CD8-positive, alpha-beta T cell (primary cell): ENCODE measurements at regions of chr3 and their contacts with region 1.

Region 1: DNA sequence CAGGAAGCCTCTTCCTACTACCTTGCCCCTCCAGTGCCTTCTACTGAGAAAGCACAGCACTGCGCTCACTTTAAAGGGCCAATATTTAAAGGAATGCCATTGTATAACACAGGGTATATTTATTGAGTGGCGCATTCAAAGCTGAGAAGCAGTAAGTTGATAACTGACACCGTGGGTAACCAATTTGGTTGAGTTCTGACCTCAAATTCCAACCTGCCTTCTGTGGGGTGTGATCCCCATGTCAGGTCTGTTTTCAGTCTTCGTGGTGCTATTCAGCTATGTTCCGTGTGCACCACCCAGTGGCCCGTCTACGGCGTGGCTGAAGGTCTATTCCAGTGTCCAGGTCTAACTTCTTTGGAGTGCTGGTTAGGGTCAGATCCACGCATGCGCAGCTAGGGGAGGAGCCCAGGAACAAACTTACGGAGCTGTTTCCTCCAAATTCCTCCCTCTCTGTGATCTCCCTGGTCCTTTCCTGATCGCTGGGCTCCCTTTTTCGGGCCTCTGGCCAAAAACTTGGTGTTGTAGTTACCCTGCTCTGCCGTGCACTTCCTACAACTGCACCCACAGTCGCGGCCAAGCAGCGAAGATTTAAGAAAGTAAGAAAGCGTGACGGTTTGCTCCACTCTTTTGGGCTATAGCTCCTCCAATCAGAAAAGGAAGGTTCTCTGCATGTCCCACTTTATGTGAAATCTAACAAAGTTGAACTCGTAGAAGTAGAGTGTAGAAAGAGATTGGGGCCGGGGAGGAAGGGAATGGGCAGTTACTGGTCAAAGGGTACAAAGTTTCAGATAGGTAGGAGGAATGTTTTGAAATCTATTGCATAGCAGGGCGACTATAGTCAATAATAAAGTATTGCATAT is 7.7 kb downstream of the LRRC2 start:
- DNase-seq: peak; percentile 37 to 89 (median 76)
- ATAC-seq: peak; percentile 97
- H3K4me3 ChIP-seq: peak overlapping the region; percentile 13 to 41
- H3K4me3 Mint-ChIP-seq: peak overlapping the region; percentile 80
- H3K27ac ChIP-seq: no peak overlapping the region
- H3K27ac Mint-ChIP-seq: peak overlapping the region; percentile 80
- H3K4me1 ChIP-seq: peaks cover 5% of the 10 kb centered on the region
- H3K4me1 Mint-ChIP-seq: peaks cover 17% of the 10 kb centered on the region
- H3K27me3 ChIP-seq: no peaks in the 10 kb centered on the region
- H3K27me3 Mint-ChIP-seq: no peaks in the 10 kb centered on the region
- CTCF ChIP-seq: peak; percentile 97

Region 2: GRCh38 chr3:45864760-45865519 is 693.5 kb before region 1 on chr3:
- CTCF ChIA-PET with region 1: no interaction called
- POLR2A ChIA-PET with region 1: no interaction called
- intact Hi-C with region 1: no loop called
- DNase-seq: peak in 2 of 9 experiments; percentile 28 to 43
- ATAC-seq: peak; percentile 25
- H3K4me3 ChIP-seq: no peak overlapping the region
- H3K4me3 Mint-ChIP-seq: peak overlapping the region; percentile 20
- H3K27ac ChIP-seq: no peak overlapping the region
- H3K27ac Mint-ChIP-seq: no peak overlapping the region
- H3K4me1 ChIP-seq: peaks cover 21% of the 10 kb centered on the region
- H3K4me1 Mint-ChIP-seq: peaks cover 35% of the 10 kb centered on the region
- H3K27me3 ChIP-seq: peaks cover 0 to 3% of the 10 kb centered on the region in 2 experiments
- H3K27me3 Mint-ChIP-seq: peaks cover 21% of the 10 kb centered on the region
- CTCF ChIP-seq: no peak

Region 3: DNA sequence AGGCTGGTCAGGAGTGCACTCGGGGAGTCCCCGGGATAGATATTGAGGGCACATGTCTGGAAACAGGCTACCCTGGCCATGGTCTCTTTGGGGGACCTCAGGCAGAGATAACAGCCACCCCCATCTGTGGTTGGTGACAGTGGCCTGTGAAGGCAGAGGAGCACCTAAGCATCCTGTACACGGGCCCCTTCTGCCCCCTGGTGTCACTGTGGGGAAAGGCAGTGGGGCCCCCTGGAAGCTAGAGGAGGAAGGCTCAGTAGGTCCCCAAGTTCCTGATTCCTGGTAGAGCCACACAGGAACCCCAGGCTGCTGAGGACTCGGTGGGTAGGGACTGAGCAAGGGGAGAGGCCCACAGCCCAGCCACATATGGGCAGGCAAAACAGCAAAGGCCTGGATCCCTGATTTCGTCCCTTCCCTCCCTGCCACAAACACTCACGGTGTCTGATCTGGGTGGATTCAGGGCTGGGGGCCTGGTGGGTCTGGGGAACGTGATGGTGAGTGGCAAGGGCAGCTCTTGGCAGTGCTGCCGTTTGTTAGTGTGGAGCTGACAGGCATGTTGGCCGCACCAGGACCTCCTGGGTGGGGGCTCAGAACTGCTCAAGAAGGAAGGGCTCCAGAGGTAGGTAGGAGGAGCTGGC is 629.3 kb before region 1 on chr3:
- CTCF ChIA-PET with region 1: no interaction called
- POLR2A ChIA-PET with region 1: no interaction called
- intact Hi-C with region 1: no loop called
- DNase-seq: peak; percentile 39 to 78 (median 66)
- ATAC-seq: peak; percentile 97
- H3K4me3 ChIP-seq: no peak overlapping the region
- H3K4me3 Mint-ChIP-seq: no peak overlapping the region
- H3K27ac ChIP-seq: no peak overlapping the region
- H3K27ac Mint-ChIP-seq: peak overlapping the region; percentile 63
- H3K4me1 ChIP-seq: no peaks in the 10 kb centered on the region
- H3K4me1 Mint-ChIP-seq: peaks cover 4% of the 10 kb centered on the region
- H3K27me3 ChIP-seq: no peaks in the 10 kb centered on the region
- H3K27me3 Mint-ChIP-seq: no peaks in the 10 kb centered on the region
- CTCF ChIP-seq: peak; percentile 72

Region 4: DNA sequence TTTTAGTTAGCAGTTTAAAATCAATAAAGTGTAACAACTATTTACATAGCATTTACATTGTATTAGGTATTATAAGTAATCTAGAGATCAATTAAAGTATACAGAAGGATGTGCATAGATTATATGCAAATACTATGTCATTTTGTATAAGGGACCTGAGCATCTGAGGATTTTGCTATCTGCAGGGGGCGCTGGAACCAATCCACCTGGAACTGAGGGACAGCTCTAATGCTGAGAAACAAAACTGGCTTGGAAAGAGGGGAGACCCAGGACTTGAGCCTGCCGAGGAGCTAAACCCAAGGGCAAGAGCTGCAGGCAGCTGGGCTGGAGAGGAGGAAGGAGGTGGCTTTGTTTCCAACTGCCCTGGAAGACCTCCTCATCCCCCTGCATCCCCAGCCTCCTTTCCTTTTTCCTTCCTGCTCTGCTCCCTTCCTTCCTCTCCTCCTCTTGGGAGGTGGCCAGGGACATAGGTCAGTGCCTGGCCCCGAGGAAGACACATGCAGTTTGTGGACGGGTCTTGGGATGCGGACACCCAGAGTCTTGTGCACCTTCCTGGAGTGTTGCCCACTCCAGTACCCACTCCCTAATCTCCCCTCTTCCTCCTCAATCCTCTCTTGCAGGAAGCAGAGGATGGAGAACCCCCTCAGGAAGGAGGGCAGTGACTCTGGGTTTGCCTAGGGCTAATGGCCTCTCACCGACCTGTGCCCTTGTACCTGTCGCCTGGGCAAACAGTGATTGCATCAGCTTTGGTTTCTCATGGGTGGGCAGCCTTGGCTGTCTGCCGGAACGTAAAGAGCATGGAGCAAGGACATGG is 61.5 kb before region 1 on chr3:
- CTCF ChIA-PET with region 1: interaction called, 301 read pairs
- POLR2A ChIA-PET with region 1: no interaction called
- intact Hi-C with region 1: loop called (anchors 1 to 2 kb)
- DNase-seq: peak; percentile 20 to 71 (median 61)
- ATAC-seq: peak; percentile 61
- H3K4me3 ChIP-seq: no peak overlapping the region
- H3K4me3 Mint-ChIP-seq: no peak overlapping the region
- H3K27ac ChIP-seq: no peak overlapping the region
- H3K27ac Mint-ChIP-seq: no peak overlapping the region
- H3K4me1 ChIP-seq: no peaks in the 10 kb centered on the region
- H3K4me1 Mint-ChIP-seq: peaks cover 7% of the 10 kb centered on the region
- H3K27me3 ChIP-seq: no peaks in the 10 kb centered on the region
- H3K27me3 Mint-ChIP-seq: no peaks in the 10 kb centered on the region
- CTCF ChIP-seq: peak; percentile 50

Region 5: DNA sequence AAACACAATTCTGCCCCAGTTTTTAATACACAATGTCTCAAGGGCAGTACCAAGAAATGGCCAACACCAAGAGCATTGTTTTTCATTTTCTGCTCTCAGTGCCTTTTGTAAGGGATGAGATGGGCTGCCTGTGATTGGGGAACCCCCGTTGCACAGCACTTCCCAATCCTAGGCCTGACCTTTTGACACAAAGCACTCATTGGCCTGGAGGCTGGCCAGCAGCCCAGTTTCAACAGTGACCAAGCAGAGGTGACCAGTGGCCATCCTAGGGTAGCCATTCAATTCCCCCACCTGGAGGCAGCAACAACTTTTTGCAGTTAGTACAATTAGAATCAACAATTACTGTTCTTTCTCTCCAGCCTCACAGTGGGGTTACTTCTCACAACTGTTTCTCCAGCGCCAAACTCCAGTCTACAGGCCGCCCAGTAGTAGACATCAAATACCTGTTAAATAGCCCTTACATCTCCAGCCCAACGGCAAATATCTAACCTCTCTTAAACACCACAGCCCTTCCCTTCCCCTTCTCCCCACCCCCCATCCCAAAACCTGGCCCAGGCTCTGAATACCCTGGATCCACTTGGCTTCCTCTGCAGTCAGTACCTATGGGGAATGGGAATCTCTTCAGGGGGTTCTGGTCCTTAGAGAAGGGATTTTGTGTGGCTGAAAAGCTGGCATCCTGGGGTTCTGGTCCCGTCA is 16.6 kb after region 1 on chr3:
- CTCF ChIA-PET with region 1: interaction called, 10 read pairs
- POLR2A ChIA-PET with region 1: no interaction called
- intact Hi-C with region 1: no loop called
- DNase-seq: no peak
- ATAC-seq: no peak
- H3K4me3 ChIP-seq: no peak overlapping the region
- H3K4me3 Mint-ChIP-seq: no peak overlapping the region
- H3K27ac ChIP-seq: no peak overlapping the region
- H3K27ac Mint-ChIP-seq: no peak overlapping the region
- H3K4me1 ChIP-seq: peaks cover 6% of the 10 kb centered on the region
- H3K4me1 Mint-ChIP-seq: peaks cover 7% of the 10 kb centered on the region
- H3K27me3 ChIP-seq: no peaks in the 10 kb centered on the region
- H3K27me3 Mint-ChIP-seq: peaks cover 10% of the 10 kb centered on the region
- CTCF ChIP-seq: no peak